Upper lobe of right lung (tissue), 1 donor: ENCODE measurements at regions of chr11 and their contacts with region 1.

Region 1: GRCh38 chr11:86938900-86939880 is 16.0 kb downstream of the FZD4 start:
- DNase-seq: no peak
- ATAC-seq: peak; percentile 76
- H3K4me3 ChIP-seq: no peak overlapping the region
- H3K27ac ChIP-seq: peak overlapping the region; percentile 75
- H3K4me1 ChIP-seq: peaks cover 42% of the 10 kb centered on the region
- H3K27me3 ChIP-seq: no peaks in the 10 kb centered on the region
- CTCF ChIP-seq: peak; percentile 73

Region 2: DNA sequence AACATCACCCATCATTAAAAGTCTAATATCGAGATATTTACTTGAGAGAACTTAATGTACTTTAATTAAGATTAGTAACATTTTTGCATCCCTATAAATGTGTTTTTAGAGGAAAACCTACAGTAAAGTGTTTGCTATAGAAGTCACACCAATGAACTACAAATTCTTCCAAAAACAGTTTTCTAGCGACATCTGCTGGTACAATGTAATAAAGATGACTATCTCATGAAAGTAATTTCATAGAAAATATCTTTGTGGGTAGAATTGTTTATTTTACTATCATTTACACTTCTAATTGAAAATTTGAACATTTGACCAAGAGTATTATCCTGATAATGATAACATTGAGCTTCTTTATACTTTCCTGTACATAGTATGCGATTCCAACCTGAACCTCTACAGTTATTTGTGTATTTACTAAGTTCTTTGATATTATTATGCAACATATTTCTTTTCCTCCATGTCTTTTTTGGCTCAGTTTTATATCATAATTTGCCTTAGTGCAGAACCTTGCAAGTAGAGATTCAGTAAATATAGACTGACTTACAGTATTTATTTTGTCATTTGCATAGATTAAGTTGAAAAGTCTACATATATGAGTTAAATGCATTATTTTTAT is 351.2 kb after region 1 on chr11:
- intact Hi-C with region 1: loop called (anchors 10 kb)
- DNase-seq: no peak
- ATAC-seq: peak; percentile 47
- H3K4me3 ChIP-seq: no peak overlapping the region
- H3K27ac ChIP-seq: no peak overlapping the region
- H3K4me1 ChIP-seq: no peaks in the 10 kb centered on the region
- H3K27me3 ChIP-seq: no peaks in the 10 kb centered on the region
- CTCF ChIP-seq: peak; percentile 75